ENCODE measurements at regions of chr11 and their contacts with region 1.

Region 1: GRCh38 chr11:46238967-46239800 is 38.3 kb upstream of the CREB3L1 start:
- DNase-seq: peak; percentile 98
- H3K4me3 ChIP-seq: peak overlapping the region; percentile 45
- H3K27ac ChIP-seq: no peak overlapping the region
- H3K4me1 ChIP-seq: peaks cover 46% of the 10 kb centered on the region
- H3K27me3 ChIP-seq: no peaks in the 10 kb centered on the region
- CTCF ChIP-seq: peak; percentile 100

Region 2: GRCh38 chr11:45872513-45873356 is 366.4 kb before region 1 on chr11:
- CTCF ChIA-PET with region 1: no interaction called
- POLR2A ChIA-PET with region 1: no interaction called
- intact Hi-C with region 1: loop called (anchors 10 kb)
- DNase-seq: peak; percentile 100
- H3K4me3 ChIP-seq: no peak overlapping the region
- H3K27ac ChIP-seq: peak overlapping the region; percentile 61
- H3K4me1 ChIP-seq: peaks cover 21% of the 10 kb centered on the region
- H3K27me3 ChIP-seq: no peaks in the 10 kb centered on the region
- CTCF ChIP-seq: peak; percentile 100

Region 3: GRCh38 chr11:46121724-46122477 is 117.3 kb before region 1 on chr11:
- CTCF ChIA-PET with region 1: interaction called, 17 read pairs
- POLR2A ChIA-PET with region 1: interaction called, 3 read pairs
- intact Hi-C with region 1: loop called (anchors 1 kb)
- DNase-seq: peak; percentile 100
- H3K4me3 ChIP-seq: peak overlapping the region; percentile 75
- H3K27ac ChIP-seq: peak overlapping the region; percentile 68
- H3K4me1 ChIP-seq: peaks cover 29% of the 10 kb centered on the region
- H3K27me3 ChIP-seq: no peaks in the 10 kb centered on the region
- CTCF ChIP-seq: no peak

Region 4: DNA sequence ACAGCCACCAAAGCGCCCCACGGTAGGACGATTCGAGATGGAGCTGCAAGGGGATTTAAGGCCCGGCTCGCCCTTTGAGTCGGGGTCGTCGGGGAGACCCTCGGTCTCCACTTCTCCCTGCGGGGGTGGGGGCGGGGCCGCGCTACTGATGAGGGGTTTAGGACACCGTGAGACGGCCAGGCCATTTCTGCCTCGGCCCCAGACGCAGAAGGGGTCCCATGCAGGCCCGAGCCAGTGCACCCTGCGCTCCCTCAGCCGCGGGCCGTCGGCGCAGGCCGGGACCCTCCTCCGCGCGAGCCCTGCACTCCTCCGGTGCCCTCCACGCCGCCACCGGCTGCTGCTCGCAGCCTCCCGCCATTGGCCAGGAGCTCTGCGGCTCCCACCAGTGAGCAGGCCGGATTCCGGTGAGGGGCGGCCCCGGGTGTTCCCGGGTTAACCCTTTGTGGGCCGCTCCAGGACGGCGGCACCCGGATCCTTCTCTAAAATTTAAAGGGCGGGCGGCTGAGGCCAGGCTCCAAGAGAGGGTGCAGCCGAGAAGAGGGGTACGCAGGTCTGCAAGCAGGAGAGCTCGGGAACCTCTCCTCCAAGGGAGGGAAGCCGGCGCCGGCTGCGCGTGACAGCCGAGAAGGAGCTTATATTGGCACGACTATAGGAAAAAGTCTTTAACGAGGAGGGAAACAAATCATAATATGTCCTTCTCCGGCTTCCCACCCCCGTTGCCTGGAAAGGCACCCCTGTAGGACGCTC is 56.3 kb after region 1 on chr11:
- CTCF ChIA-PET with region 1: interaction called, 9 read pairs
- POLR2A ChIA-PET with region 1: interaction called, 3 read pairs
- intact Hi-C with region 1: loop called (anchors 5 kb)
- DNase-seq: peak; percentile 97
- H3K4me3 ChIP-seq: peak overlapping the region; percentile 50
- H3K27ac ChIP-seq: peak overlapping the region; percentile 22
- H3K4me1 ChIP-seq: peaks cover 32% of the 10 kb centered on the region
- H3K27me3 ChIP-seq: no peaks in the 10 kb centered on the region
- CTCF ChIP-seq: no peak

Region 5: DNA sequence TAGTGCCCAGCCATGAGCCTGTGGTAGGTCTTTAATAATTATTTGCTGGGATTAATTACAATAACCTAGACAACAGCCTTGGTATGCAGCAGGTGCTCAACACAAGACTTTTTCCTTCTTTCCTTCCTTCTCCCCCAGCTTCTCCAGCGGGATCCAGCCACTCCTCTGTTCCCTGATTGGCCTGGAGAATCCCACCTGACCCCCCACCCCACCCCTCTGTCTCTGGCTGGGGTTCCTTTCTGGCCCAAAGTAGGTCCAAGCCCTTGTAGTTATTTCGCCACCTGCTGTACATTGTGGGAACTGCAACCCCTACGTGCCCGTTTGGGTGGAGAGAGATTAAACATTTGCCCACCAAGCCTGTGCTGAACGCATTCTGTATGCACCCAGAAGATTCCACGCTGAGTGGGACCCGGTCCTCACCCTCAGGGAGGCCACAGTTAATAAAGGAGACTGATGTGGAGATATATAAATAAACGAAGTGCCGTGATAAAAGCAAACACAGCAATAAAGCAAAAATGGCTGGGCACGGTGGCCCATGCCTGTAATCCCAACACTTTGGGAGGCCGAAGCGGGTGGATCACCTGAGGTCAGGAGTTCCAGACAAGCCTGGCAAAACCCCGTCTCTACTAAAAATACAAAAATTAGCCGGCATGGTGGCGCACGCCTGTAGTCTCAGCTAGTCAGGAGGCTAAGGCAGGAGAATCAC is 76.0 kb after region 1 on chr11:
- CTCF ChIA-PET with region 1: interaction called, 205 read pairs
- POLR2A ChIA-PET with region 1: interaction called, 5 read pairs
- intact Hi-C with region 1: loop called (anchors 1 kb)
- DNase-seq: peak; percentile 99
- H3K4me3 ChIP-seq: no peak overlapping the region
- H3K27ac ChIP-seq: no peak overlapping the region
- H3K4me1 ChIP-seq: no peaks in the 10 kb centered on the region
- H3K27me3 ChIP-seq: no peaks in the 10 kb centered on the region
- CTCF ChIP-seq: peak; percentile 100

Region 6: DNA sequence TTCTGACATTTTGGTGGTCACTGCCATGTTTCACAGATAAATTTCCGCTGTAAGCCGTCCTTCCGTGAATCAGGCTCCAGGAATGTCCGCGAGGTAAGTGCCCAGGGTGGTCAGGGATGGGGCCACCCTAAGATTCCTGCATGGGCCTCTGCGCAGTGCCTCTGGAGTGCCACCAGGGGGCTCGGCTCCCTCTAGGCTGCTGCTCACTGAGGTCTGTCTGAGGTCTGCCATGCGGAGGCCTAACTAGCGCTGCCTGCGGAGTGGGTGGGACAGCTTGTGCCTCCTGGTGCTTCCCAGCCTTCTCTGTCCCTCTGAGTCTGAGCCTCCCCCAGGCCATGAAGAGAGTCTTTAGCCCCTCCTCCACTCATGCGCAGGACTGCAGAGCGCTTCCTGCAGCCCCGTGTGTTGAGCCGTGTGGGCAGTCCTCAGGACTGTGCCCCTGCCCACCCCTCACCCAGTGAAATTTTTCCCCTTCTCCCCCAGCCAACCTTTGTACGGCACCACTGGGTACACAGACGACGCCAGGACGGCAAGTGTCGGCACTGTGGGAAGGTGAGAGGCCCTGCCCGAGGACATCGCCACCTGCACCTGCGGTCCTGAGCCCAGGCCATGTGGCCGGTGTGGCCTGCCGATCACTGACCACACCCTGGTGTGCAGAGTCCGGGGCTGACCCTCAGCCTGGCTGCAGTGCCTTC is 130.4 kb after region 1 on chr11:
- CTCF ChIA-PET with region 1: no interaction called
- POLR2A ChIA-PET with region 1: no interaction called
- intact Hi-C with region 1: loop called (anchors 2 kb)
- DNase-seq: peak; percentile 96
- H3K4me3 ChIP-seq: no peak overlapping the region
- H3K27ac ChIP-seq: no peak overlapping the region
- H3K4me1 ChIP-seq: peaks cover 13% of the 10 kb centered on the region
- H3K27me3 ChIP-seq: no peaks in the 10 kb centered on the region
- CTCF ChIP-seq: peak; percentile 100

Region 7: GRCh38 chr11:46537537-46538295 is 298.5 kb after region 1 on chr11:
- CTCF ChIA-PET with region 1: interaction called, 3 read pairs
- POLR2A ChIA-PET with region 1: no interaction called
- intact Hi-C with region 1: loop called (anchors 2 kb)
- DNase-seq: peak; percentile 96
- H3K4me3 ChIP-seq: no peak overlapping the region
- H3K27ac ChIP-seq: peak overlapping the region; percentile 1
- H3K4me1 ChIP-seq: peaks cover 30% of the 10 kb centered on the region
- H3K27me3 ChIP-seq: no peaks in the 10 kb centered on the region
- CTCF ChIP-seq: peak; percentile 100

Measured in A673 (cell line).